Gastrocnemius medialis (tissue), 4 donors: ENCODE measurements at regions of chr22 and their contacts with region 1.

Region 1: DNA sequence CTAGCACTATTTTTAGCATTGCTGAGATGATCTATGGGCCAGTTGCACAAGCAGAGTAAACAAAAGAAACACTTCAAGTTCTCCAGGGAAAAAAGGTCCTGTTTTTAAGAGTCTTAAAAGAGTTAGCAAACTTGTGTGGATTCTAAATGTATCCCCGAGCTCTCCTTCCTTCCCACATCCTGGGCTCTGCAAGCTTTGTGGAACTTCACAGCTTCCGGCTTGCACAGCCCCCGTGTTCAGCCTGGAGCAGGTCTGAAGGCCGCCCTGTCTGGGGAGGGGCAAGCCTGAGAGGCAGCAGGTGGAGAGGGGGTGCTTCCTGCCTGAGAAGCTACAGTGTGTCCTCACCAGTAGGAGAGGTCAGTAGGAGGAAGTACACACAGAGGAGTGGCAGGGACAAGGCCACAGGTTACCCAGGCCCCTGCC is 35.1 kb upstream of the SUSD2 start:
- DNase-seq: peak; percentile 62 to 75
- ATAC-seq: peak; percentile 82 to 89
- H3K4me3 ChIP-seq: no peak overlapping the region
- H3K27ac ChIP-seq: peak overlapping the region; percentile 81 to 85 (median 82)
- H3K4me1 ChIP-seq: peaks cover 36 to 43% of the 10 kb centered on the region in 2 donors
- H3K27me3 ChIP-seq: no peaks in the 10 kb centered on the region
- CTCF ChIP-seq: no peak
- POLR2A ChIP-seq: peak in 1 of 2 donors; percentile 10

Region 2: DNA sequence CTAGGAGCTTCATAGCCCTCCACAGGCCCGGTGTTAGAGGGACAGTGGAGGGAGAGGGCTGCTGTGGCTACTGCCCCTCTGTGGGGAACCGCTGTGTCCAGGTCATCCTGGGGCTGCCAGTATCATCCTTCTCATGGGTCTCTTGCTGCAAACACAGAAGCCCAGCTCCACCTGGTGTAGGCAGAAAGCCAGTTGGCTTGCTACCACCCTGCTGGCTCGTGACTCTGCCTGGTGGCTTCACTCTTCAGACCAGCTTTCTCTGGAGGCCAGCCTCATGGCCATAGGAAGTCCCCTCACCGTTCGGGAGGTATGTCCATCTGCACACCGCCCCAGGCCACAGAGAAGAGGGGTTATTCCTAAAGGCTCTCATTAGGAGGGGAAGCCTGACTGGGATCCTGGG is 15.7 kb after region 1 on chr22:
- in situ Hi-C with region 1: no loop called
- intact Hi-C with region 1: loop called (anchors 2 kb)
- DNase-seq: peak; percentile 60 to 81
- ATAC-seq: peak; percentile 76 to 84
- H3K4me3 ChIP-seq: no peak overlapping the region
- H3K27ac ChIP-seq: peak overlapping the region; percentile 15 to 64 (median 60)
- H3K4me1 ChIP-seq: peaks cover 18 to 23% of the 10 kb centered on the region in 2 donors
- H3K27me3 ChIP-seq: no peaks in the 10 kb centered on the region
- CTCF ChIP-seq: no peak
- POLR2A ChIP-seq: no peak

Region 3: DNA sequence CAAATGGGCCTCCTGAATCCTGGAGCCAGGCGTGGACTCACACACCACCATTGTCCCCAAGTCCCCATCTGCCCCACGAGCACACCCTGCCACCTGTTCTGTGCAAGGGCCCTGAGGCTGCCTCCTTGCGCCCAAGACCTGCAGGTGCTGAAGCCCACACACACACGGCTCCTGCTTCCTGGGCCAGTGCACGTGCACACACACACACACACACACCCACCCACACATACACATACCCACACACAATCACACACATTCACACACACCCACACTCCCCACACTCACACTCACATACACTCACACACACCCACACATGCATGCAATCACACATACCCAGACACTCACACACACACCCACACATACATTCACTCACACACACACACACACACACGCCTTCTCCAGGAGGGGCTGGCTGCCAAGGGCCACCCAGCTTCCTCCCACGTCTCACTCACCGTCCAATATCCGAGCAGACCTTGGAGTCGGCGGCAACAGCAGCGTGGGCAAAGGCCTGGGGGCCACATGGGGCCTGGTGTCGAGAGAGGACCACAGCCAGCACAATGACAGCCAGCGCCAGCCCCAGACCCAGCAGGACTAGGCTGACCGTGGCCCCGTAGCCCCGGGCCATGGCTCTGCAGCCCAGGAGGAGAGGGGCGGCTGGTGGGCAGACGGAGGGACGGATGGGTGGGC is 98.0 kb after region 1 on chr22:
- in situ Hi-C with region 1: no loop called
- intact Hi-C with region 1: no loop called
- DNase-seq: no peak
- ATAC-seq: no peak
- H3K4me3 ChIP-seq: peak overlapping the region; percentile 43 to 53 (median 50)
- H3K27ac ChIP-seq: peak overlapping the region; percentile 72 to 82 (median 74)
- H3K4me1 ChIP-seq: peaks cover 14 to 20% of the 10 kb centered on the region in 2 donors
- H3K27me3 ChIP-seq: no peaks in the 10 kb centered on the region
- CTCF ChIP-seq: no peak
- POLR2A ChIP-seq: no peak